Activated CD4-positive, alpha-beta T cell treated with anti-CD3 and anti-CD28 coated beads for 36 hours (primary cell): ENCODE measurements at regions of chr1 and their contacts with region 1.

Region 1: GRCh38 chr1:89085781-89086180 is 20.8 kb upstream of the GBP1 start:
- DNase-seq: peak; percentile 70
- ATAC-seq: peak; percentile 78
- H3K4me3 Mint-ChIP-seq: no peak overlapping the region
- H3K27ac Mint-ChIP-seq: no peak overlapping the region
- H3K4me1 Mint-ChIP-seq: peaks cover 6% of the 10 kb centered on the region
- H3K27me3 Mint-ChIP-seq: no peaks in the 10 kb centered on the region

Region 2: DNA sequence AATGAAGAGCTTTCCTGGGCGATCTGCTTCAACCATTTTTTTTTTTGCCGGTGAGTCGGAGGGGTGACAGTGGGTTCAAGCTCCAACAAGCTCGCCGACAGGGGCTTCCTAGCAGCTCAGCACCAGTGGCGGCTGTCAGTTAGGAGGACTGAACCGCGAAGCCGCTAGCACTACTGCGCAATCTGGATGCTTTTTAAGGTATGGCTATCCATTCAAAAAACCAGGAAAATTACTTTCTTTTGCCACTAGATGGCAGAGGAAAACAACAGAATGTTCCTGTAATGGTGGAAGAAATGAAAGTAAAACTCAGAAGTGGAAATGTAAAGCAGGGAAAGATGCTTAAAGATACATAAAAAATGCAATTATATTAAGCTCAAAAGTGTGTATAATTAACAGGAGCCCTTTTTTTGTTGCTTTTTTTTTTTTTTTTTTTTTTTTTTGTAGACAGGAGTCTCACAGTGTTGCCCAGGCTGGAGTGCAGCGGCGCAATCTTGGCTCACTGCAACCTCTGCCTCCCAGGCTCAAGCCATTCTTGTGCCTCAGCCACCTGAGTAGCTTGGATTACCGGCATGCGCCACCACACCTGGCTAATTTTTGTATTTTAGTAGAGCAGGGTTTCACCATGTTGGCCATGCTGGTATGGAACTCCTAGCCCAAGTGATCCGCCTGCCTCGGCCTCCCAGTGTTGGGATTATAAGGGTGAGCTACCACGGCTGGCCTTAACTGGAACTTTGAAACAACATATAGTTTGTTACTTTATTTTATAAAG is 101.8 kb before region 1 on chr1:
- CTCF ChIA-PET with region 1: interaction called, 5 read pairs
- POLR2A ChIA-PET with region 1: no interaction called
- intact Hi-C with region 1: loop called in 1 of 2 experiments (anchors 5 kb)
- DNase-seq: peak; percentile 47
- ATAC-seq: peak; percentile 29
- H3K4me3 Mint-ChIP-seq: peak overlapping the region; percentile 43
- H3K27ac Mint-ChIP-seq: peak overlapping the region; percentile 87
- H3K4me1 Mint-ChIP-seq: peaks cover 86% of the 10 kb centered on the region
- H3K27me3 Mint-ChIP-seq: no peaks in the 10 kb centered on the region

Region 3: DNA sequence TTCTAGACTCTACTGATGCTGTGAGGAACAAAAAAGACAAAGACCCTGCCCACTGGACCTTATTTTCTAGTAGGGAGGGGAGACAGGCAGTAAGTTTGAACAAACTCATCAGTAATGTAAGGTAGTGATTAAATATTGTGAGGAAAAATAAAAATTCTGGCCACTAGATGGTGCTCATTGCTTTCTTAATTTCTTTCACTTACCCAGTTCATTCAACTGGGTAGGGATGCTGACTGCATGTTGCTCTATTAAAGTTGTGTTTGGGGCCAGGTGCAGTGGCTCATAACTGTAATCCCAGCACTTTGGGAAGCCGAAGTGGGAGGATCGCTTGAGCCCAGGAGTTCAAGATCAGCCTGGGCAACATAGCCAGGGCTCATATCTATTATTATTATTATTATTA is 87.1 kb before region 1 on chr1:
- CTCF ChIA-PET with region 1: interaction called, 33 read pairs
- POLR2A ChIA-PET with region 1: no interaction called
- intact Hi-C with region 1: loop called (anchors 1 to 5 kb)
- DNase-seq: peak; percentile 22
- ATAC-seq: peak; percentile 88
- H3K4me3 Mint-ChIP-seq: no peak overlapping the region
- H3K27ac Mint-ChIP-seq: no peak overlapping the region
- H3K4me1 Mint-ChIP-seq: peaks cover 31% of the 10 kb centered on the region
- H3K27me3 Mint-ChIP-seq: peaks cover 5% of the 10 kb centered on the region

Region 4: GRCh38 chr1:89040315-89040626 is 45.5 kb before region 1 on chr1:
- CTCF ChIA-PET with region 1: no interaction called
- POLR2A ChIA-PET with region 1: no interaction called
- intact Hi-C with region 1: no loop called
- DNase-seq: no peak
- ATAC-seq: no peak
- H3K4me3 Mint-ChIP-seq: no peak overlapping the region
- H3K27ac Mint-ChIP-seq: no peak overlapping the region
- H3K4me1 Mint-ChIP-seq: peaks cover 35% of the 10 kb centered on the region
- H3K27me3 Mint-ChIP-seq: peaks cover 14% of the 10 kb centered on the region

Region 5: DNA sequence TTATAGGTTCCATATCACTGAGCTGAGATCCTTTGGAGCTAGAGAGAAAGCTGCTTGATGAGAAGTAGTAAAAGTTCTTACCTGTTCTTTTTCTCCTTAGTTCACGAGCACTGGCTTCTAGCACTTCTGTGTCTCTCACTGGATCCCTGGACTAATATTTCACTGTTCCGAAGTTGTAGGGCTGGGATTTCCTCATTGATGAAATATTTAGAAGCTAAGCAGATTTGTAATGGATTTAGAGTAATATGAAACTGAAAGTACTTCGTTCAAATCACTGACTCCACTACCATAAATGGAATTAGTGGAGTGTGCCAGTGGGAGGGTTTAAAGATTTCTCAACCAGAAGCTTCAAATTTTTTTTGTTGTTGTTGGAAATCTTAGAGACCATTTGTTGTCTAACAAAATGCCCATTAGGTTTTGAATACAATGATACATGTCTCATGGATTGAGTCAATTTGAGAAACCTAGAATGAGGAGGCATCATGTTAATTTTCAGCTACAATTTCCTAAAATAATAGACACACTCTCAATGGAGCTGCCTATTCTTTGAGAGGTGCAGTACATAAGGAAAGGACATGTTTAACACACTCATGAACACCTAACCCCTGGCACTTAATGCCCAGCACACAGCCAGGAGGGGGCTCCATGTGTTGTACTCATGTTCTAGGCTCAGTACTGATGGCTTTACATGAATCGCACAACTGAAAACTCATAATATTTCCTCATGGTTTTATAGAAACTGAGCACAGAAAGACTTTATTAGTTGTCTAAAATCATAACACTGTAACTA is 20.5 kb before region 1 on chr1 and contains the start of gene GBP1:
- CTCF ChIA-PET with region 1: interaction called, 16 read pairs
- POLR2A ChIA-PET with region 1: no interaction called
- intact Hi-C with region 1: no loop called
- DNase-seq: peak; percentile 24
- ATAC-seq: peak; percentile 77
- H3K4me3 Mint-ChIP-seq: peak within 1 kb of the TSS; percentile 78
- H3K27ac Mint-ChIP-seq: peak within 1 kb of the TSS; percentile 93
- H3K4me1 Mint-ChIP-seq: peaks cover 58% of the 10 kb centered on the region
- H3K27me3 Mint-ChIP-seq: no peaks in the 10 kb centered on the region
- total RNA-seq, gene GBP1: 67.6 to 79.9 TPM

Region 6: DNA sequence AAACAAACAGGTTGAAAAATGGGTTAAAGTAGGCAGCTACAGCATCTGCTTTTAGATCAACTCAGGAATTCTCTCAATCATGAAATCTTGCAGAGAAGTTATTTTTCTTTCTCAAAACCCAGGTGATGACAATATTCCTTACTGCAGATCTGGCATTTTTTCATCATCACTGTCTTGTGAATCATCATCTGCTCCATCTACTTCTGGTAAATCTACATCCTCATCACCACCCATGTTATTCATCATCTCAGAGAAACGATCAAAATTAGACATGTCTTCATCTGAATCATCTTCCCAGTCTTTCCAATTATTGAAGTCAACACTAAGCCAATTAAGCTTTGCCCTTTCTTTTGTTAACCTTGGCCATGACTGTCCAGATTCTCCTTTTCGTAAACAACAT is 18.4 kb after region 1 on chr1:
- CTCF ChIA-PET with region 1: interaction called, 10 read pairs
- POLR2A ChIA-PET with region 1: no interaction called
- intact Hi-C with region 1: loop called in 1 of 2 experiments (anchors 2 kb)
- DNase-seq: no peak
- ATAC-seq: peak; percentile 80
- H3K4me3 Mint-ChIP-seq: no peak overlapping the region
- H3K27ac Mint-ChIP-seq: peak overlapping the region; percentile 74
- H3K4me1 Mint-ChIP-seq: peaks cover 46% of the 10 kb centered on the region
- H3K27me3 Mint-ChIP-seq: no peaks in the 10 kb centered on the region

Region 7: DNA sequence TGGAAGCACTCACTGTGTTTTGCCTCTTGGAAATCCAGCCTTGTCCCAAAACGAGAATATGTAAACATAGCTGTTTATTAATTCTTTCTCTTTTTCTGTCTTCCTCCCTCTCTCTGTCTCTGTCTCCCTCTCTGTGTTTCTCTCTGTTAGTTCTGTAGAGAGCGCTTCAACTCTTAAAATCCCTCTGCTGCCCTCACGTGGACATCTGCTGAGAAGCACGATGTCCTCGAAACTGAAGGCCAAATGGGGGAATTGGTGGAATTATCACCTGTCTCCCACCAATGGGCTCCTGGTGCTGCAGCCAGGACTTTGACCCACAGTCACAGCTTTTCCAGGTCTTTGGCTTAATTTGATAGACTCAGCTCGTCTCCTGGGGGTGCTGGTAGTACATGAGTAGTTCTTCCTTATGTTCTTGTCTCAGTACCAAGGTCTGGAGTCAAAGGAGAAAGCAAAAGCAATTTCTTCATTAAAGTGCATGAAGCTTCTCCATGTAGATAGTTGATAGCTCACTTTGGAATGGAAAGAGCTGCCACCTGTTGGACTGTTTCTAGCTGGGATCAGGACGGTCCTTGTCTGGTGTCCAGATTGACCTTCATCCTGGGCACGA is 272.6 kb after region 1 on chr1:
- CTCF ChIA-PET with region 1: interaction called, 57 read pairs
- POLR2A ChIA-PET with region 1: no interaction called
- intact Hi-C with region 1: loop called (anchors 1 kb)
- DNase-seq: peak; percentile 90
- ATAC-seq: peak; percentile 73
- H3K4me3 Mint-ChIP-seq: peak overlapping the region; percentile 55
- H3K27ac Mint-ChIP-seq: peak overlapping the region; percentile 84
- H3K4me1 Mint-ChIP-seq: peaks cover 46% of the 10 kb centered on the region
- H3K27me3 Mint-ChIP-seq: no peaks in the 10 kb centered on the region